Posterior vena cava (tissue), 2 donors: ENCODE measurements at regions of chr7 and their contacts with region 1.

Region 1: DNA sequence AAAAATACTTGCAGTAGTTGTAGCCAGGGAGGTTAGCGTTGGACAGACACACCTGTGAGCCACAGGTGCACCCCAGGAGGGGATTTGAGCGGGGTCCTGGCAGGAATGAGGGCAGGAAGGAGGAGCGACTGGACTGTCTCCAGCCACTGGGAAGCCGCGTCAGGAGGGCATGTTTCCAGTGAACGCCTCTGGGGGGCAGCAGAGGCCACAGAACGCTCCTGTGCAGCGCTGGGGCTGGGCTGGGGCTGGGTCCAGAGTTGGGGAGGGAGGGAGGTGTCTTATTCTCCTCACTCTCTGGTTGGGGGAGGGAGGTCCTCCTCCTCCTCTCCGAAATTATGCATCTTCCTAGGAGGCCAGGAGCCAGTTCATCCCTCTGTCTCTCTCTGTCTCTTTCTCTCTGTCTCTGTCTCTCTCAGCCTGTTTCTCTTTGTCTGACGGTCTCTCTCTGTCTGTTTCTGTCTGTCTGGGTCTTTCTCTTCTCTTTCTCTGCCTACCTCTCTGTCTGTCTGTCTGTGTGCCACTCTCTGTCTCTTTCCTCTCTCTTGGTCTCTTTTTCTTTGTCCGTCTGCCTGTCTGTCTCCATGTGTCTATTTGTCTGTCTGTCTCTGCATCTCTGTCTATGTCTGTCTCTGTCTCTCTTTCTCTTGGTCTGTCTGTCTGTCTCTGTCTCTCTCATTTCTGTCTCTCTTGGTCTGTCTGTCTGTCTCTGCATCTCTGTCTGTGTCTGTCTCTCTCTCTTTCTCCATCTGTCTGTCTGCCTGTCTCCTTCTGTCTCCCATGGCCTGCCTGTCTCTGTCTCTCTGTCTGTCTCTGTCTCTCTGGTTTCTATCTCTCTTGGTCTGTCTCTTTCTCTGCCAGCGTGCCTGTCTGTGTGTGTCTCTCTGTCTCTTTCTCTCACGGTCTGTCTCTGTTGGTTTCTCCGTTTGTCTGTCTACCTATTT is 9.9 kb upstream of the PSMG3 start:
- DNase-seq: peak; percentile 91

Region 2: GRCh38 chr7:1646957-1647891 is 67.5 kb after region 1 on chr7:
- intact Hi-C with region 1: no loop called
- DNase-seq: peak; percentile 86

Region 3: GRCh38 chr7:1664711-1665548 is 85.2 kb after region 1 on chr7:
- intact Hi-C with region 1: no loop called
- DNase-seq: peak; percentile 86

Region 4: DNA sequence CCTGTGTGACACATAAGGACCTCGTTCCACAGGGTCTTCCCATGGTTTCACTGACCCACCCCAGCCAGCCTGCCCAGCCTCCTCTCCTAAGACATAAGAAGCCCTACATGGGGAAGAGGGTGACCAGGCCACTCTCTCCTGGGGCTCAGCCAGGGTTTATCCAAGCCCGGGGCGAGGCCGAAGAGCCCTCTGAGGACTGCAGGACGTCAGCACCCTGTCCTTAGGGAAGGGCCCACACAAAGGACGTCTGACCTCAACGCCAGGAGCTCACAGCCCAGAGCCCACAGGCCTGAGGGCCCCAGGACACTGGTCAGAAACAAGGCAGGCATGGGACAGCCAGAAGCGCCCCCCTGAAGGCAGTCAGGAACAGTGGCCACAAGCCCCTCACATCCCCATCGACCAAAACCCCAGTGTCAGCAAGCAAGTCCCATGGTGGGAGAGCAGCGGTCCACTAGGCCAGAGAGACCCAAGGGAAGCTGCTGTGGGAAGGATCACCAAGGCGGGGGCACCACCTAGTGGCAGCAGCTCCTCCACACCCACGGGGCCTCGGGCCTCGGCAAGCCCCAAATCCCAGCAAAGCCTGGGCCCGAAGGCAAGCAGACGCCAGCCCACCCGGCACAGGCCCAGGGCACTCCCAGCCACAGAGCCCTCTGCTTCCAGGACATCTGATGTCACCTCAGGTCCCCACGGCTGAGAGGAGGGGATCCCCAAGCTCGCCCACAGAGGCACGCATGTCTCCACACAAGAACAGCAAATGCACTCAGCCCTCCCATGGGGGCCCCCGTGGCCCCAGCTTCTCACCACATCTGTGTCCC is 629.6 kb after region 1 on chr7:
- intact Hi-C with region 1: loop called (anchors 5 to 10 kb)
- DNase-seq: peak; percentile 88

Region 5: DNA sequence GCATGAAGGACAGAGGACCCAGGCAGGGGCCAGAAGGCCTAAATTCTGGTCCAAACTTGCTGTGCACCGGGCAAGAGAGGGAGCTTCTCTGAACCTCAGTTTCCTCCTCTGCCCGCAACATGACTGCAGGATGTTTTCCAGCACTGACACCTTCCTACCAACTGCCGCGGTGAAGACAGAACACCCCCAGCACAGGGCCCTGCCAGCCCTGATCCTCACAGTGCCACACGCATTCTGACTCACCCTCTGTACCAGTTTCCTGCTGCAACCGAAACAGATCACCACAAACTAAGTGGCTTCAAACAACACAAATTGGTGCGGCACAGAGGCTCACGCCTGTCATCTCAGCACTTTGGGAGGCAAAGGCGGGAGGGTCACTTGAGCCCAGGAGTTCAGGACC is 634.9 kb after region 1 on chr7:
- intact Hi-C with region 1: loop called (anchors 5 to 10 kb)
- DNase-seq: no peak

Region 6: GRCh38 chr7:2354186-2354938 is 774.6 kb after region 1 on chr7 and contains the start of gene EIF3B:
- intact Hi-C with region 1: loop called (anchors 5 to 10 kb)
- DNase-seq: peak; percentile 97
- total RNA-seq, gene EIF3B: 78.1 to 90.1 TPM

Region 7: GRCh38 chr7:2471396-2471795 is 891.6 kb after region 1 on chr7:
- intact Hi-C with region 1: loop called in 1 of 2 experiments (anchors 5 kb)
- DNase-seq: no peak